Motor neuron (in vitro differentiated cells): ENCODE measurements at regions of chr1 and their contacts with region 1.

Region 1: GRCh38 chr1:76868154-76868882 is 1.0 kb downstream of the ST6GALNAC5 start:
- ATAC-seq: peak; percentile 78 to 89 (median 83)
- H3K4me3 ChIP-seq: peak overlapping the region; percentile 57 to 91 (median 82)
- H3K27ac ChIP-seq: peak overlapping the region; percentile 29 to 61
- H3K4me1 ChIP-seq: peaks cover 5 to 46% of the 10 kb centered on the region in 2 donors

Region 2: DNA sequence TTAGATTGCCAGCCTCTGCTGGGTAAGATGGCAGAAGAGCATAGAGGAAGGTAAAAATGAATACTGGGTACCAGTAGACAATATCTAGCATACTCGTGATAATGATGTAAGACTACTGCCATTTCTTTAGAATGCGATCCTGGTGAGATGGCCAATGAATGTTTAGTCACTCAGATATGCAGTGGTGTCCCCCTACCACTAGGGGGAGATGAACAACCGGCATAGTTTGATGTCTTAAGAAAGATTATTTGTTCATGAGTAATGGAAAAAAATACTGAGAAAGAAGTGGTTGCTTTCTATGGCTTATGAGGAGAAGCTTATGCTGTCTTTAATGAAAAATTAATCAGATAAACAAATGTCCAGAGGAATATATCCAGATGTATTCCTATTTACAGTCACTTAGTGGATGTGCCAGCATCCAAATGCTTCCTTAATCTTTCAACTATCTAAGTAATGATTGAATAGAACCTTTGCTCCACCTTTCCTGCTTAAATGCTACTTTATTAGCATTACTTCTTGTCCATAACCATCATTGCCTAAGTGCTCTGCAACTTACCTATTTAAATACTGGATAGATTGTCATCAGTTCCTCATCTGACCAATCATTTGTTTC is 537.2 kb before region 1 on chr1:
- in situ Hi-C with region 1: loop called in 4 of 9 experiments (anchors 25 kb)
- ATAC-seq: peak in 5 of 8 experiments; percentile 51 to 80 (median 73)
- H3K4me3 ChIP-seq: no peak overlapping the region
- H3K27ac ChIP-seq: no peak overlapping the region
- H3K4me1 ChIP-seq: peaks cover 4 to 10% of the 10 kb centered on the region in 2 donors

Region 3: DNA sequence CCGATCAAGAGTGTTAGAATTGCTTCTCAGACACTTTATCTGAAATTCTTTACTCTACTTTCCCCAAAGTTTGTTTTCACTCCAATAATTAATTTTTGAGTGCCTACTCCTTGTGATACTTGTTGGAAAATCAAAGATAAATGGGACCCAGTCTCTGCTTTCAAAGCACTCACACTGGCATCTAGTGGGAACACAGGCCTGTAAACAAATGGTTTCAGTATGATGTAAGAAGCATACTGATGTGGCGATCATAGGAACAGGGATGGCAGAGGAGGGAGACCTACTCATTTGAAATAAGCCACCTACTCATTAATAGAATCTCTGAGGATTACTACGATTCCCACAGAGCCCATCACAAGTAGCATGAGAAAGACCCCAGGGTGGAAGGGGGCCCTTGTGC is 274.7 kb before region 1 on chr1:
- in situ Hi-C with region 1: loop called in 1 of 9 experiments (anchors 25 kb)
- ATAC-seq: peak in 2 of 8 experiments; percentile 48 to 76
- H3K4me3 ChIP-seq: no peak overlapping the region
- H3K27ac ChIP-seq: no peak overlapping the region
- H3K4me1 ChIP-seq: peaks cover 0 to 15% of the 10 kb centered on the region in 2 donors

Region 4: GRCh38 chr1:76687307-76688175 is 180.8 kb before region 1 on chr1:
- in situ Hi-C with region 1: loop called in 1 of 9 experiments (anchors 25 kb)
- ATAC-seq: peak in 7 of 8 experiments; percentile 6 to 96 (median 94)
- H3K4me3 ChIP-seq: no peak overlapping the region
- H3K27ac ChIP-seq: no peak overlapping the region
- H3K4me1 ChIP-seq: peaks cover 0 to 27% of the 10 kb centered on the region in 2 donors

Region 5: GRCh38 chr1:77120950-77121349 is 252.6 kb after region 1 on chr1:
- in situ Hi-C with region 1: loop called in 1 of 9 experiments (anchors 25 kb)
- ATAC-seq: peak; percentile 49 to 88 (median 78)
- H3K4me3 ChIP-seq: no peak overlapping the region
- H3K27ac ChIP-seq: peak overlapping the region in 1 of 2 donors; percentile 9
- H3K4me1 ChIP-seq: peaks cover 5 to 18% of the 10 kb centered on the region in 2 donors